ENCODE measurements at regions of chr11 and their contacts with region 1.

Region 1: GRCh38 chr11:105489446-105489845 is 120.4 kb upstream of the GRIA4 start:
- DNase-seq: no peak
- ATAC-seq: no peak
- H3K4me3 ChIP-seq: no peak overlapping the region
- H3K4me3 Mint-ChIP-seq: no peak overlapping the region
- H3K27ac ChIP-seq: no peak overlapping the region
- H3K27ac Mint-ChIP-seq: no peak overlapping the region
- H3K4me1 ChIP-seq: no peaks in the 10 kb centered on the region
- H3K4me1 Mint-ChIP-seq: no peaks in the 10 kb centered on the region
- H3K27me3 ChIP-seq: no peaks in the 10 kb centered on the region
- H3K27me3 Mint-ChIP-seq: peaks cover 4% of the 10 kb centered on the region
- CTCF ChIP-seq: no peak

Region 2: GRCh38 chr11:105432241-105432995 is 57.0 kb before region 1 on chr11:
- CTCF ChIA-PET with region 1: no interaction called
- POLR2A ChIA-PET with region 1: no interaction called
- intact Hi-C with region 1: loop called in 1 of 2 experiments (anchors 5 kb)
- DNase-seq: no peak
- ATAC-seq: no peak
- H3K4me3 ChIP-seq: no peak overlapping the region
- H3K4me3 Mint-ChIP-seq: no peak overlapping the region
- H3K27ac ChIP-seq: no peak overlapping the region
- H3K27ac Mint-ChIP-seq: no peak overlapping the region
- H3K4me1 ChIP-seq: no peaks in the 10 kb centered on the region
- H3K4me1 Mint-ChIP-seq: no peaks in the 10 kb centered on the region
- H3K27me3 ChIP-seq: no peaks in the 10 kb centered on the region
- H3K27me3 Mint-ChIP-seq: no peaks in the 10 kb centered on the region
- CTCF ChIP-seq: no peak

Region 3: DNA sequence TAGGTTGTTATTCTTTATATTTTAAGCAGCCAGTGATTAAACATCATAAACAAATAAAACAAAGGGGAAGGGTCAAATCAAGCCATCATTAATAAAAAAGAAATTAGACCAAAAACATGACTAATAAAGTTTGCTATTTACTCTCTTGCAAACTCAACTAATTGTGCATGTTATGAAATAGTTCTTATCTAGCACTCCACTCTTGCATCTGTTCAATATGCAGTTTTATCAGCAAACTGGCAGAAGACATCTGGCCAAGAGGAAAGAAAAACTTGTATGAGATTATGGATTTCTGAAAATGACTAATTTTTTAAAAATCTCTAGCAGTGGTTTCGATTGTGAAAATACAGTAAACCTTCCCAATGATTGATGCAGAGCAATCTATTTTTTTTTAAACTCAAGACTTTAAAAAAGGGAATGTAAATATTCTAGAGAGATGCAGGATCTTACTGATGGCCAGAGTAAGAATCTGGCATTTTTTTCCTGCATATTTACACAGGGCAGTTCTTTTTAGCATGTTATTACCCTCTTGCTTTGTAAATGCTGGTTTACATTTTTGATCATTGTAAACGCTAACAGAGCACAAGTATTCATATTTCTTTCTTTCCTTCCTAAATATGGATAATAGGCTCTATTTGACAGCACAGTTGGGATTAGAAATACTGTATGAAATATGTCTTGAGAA is 203.8 kb after region 1 on chr11:
- CTCF ChIA-PET with region 1: no interaction called
- POLR2A ChIA-PET with region 1: no interaction called
- intact Hi-C with region 1: no loop called
- DNase-seq: no peak
- ATAC-seq: no peak
- H3K4me3 ChIP-seq: no peak overlapping the region
- H3K4me3 Mint-ChIP-seq: no peak overlapping the region
- H3K27ac ChIP-seq: no peak overlapping the region
- H3K27ac Mint-ChIP-seq: no peak overlapping the region
- H3K4me1 ChIP-seq: no peaks in the 10 kb centered on the region
- H3K4me1 Mint-ChIP-seq: no peaks in the 10 kb centered on the region
- H3K27me3 ChIP-seq: no peaks in the 10 kb centered on the region
- H3K27me3 Mint-ChIP-seq: no peaks in the 10 kb centered on the region
- CTCF ChIP-seq: no peak